Thyroid gland (tissue), 4 donors: ENCODE measurements at regions of chr12 and their contacts with region 1.

Region 1: DNA sequence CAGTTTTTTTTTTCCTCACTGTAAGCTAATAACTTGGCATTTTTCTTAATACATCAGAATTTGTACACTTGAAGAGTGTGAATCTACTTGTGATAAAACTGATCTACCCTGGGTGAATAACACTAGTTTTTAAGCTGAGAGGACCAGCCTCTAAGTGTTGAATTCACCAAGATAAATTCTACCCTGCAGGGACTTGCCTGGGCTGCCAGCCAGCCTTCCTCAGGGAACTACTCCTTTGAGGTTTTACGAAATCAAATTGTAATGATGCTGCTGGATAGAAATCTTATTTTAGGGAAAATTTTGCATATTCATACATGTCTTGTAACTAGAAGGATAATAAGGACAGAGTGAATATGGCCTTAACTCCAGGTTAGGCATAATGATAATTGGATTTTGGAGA is 1.9 kb downstream of the MED21 start:
- DNase-seq: no peak
- H3K4me3 ChIP-seq: no peak overlapping the region
- H3K27ac ChIP-seq: no peak overlapping the region
- H3K4me1 ChIP-seq: peaks cover 7 to 19% of the 10 kb centered on the region in 2 donors
- H3K27me3 ChIP-seq: no peaks in the 10 kb centered on the region
- CTCF ChIP-seq: no peak
- POLR2A ChIP-seq: no peak

Region 2: GRCh38 chr12:26732005-26732908 is 292.0 kb before region 1 on chr12:
- intact Hi-C with region 1: no loop called
- DNase-seq: no peak
- H3K4me3 ChIP-seq: no peak overlapping the region
- H3K27ac ChIP-seq: peak overlapping the region in 1 of 3 donors; percentile 30
- H3K4me1 ChIP-seq: peaks cover 21 to 27% of the 10 kb centered on the region in 2 donors
- H3K27me3 ChIP-seq: no peaks in the 10 kb centered on the region
- CTCF ChIP-seq: no peak
- POLR2A ChIP-seq: no peak

Region 3: GRCh38 chr12:27305673-27306456 is 281.6 kb after region 1 on chr12:
- intact Hi-C with region 1: loop called (anchors 10 kb)
- DNase-seq: no peak
- H3K4me3 ChIP-seq: no peak overlapping the region
- H3K27ac ChIP-seq: no peak overlapping the region
- H3K4me1 ChIP-seq: no peaks in the 10 kb centered on the region
- H3K27me3 ChIP-seq: no peaks in the 10 kb centered on the region
- CTCF ChIP-seq: peak; percentile 4 to 70 (median 37)
- POLR2A ChIP-seq: no peak

Region 4: GRCh38 chr12:27319409-27319808 is 295.1 kb after region 1 on chr12:
- intact Hi-C with region 1: no loop called
- DNase-seq: no peak
- H3K4me3 ChIP-seq: no peak overlapping the region
- H3K27ac ChIP-seq: no peak overlapping the region
- H3K4me1 ChIP-seq: no peaks in the 10 kb centered on the region
- H3K27me3 ChIP-seq: no peaks in the 10 kb centered on the region
- CTCF ChIP-seq: no peak
- POLR2A ChIP-seq: no peak